MCF 10A (cell line): ENCODE measurements at regions of chr9 and their contacts with region 1.

Region 1: DNA sequence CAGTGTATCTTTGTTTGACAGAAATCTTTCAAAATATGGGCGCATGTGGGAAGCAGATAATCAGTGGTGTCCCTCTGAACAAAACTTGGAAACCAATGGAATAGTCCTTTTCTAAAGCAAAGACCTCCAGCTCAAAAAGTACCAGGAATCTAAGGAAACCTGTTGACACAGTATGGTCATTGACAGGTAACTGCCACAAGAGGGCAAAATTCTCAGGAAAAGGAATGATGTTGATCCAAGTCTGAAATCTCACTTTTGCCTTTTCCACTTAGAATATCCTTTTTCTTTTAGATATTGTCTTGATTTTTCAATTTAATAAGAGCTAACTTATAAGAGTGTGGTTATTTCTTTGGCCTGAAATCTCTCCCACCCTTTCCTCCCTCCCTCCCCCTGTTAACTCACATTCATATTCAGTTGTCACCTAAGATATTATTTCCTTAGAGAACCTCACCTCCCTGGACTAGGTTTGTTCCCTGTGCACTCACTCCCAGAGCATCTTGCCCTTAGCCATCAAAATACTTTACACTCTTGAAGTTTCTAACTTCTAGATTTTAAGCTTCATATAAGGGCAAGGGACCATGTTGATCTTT is 59.0 kb upstream of the BARX1 start:
- DNase-seq: peak; percentile 62
- H3K4me3 Mint-ChIP-seq: no peak overlapping the region
- H3K27ac Mint-ChIP-seq: no peak overlapping the region
- H3K4me1 Mint-ChIP-seq: peaks cover 7% of the 10 kb centered on the region
- H3K27me3 Mint-ChIP-seq: no peaks in the 10 kb centered on the region
- CTCF ChIP-seq: peak; percentile 47

Region 2: GRCh38 chr9:93962561-93963440 is 51.4 kb before region 1 on chr9:
- CTCF ChIA-PET with region 1: interaction called, 23 read pairs
- POLR2A ChIA-PET with region 1: no interaction called
- intact Hi-C with region 1: no loop called
- DNase-seq: peak; percentile 92
- H3K4me3 Mint-ChIP-seq: no peak overlapping the region
- H3K27ac Mint-ChIP-seq: peak overlapping the region; percentile 2
- H3K4me1 Mint-ChIP-seq: peaks cover 8% of the 10 kb centered on the region
- H3K27me3 Mint-ChIP-seq: no peaks in the 10 kb centered on the region
- CTCF ChIP-seq: peak; percentile 75

Region 3: DNA sequence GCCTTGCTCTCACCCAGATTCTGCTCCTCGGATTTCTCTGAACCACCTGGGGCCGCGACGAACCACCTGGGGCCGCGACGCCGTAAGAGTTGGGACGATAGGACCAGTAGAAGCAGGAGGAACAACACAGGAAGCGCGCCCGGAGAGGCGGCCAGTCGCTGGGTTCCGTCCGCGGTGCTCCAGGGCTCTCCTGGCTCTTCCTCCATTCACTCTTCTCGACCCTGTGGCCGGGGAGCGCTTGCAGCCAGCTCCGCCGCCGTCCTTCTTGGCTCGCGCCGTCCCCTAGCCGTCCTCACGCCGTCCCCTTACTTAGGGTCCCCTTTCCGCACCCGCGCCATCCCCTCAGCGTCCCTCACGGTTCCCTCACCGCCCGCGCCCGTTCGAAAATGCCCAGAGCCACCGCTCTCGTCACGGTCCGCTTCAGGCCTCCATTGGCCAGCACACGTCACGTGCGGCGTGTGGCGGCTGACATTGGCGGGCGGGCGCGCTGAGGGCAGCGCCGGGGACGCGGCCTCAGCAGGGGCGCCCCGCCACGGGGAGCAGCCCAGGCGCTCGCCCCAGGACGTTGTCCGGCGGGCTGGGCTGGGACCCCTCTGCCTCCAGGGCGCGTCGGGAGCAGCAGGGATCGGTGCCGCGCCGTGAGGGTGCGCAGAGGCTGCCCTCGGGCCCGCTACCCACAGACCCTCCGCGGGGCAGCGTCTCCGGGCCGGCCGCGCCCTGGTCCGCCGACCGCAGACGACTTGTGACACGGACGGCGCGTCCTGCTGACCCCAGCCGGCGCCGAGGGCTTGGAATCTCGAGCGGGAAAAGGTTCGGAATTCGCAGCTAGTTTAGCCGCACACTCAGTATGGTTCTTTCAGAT is 16.4 kb after region 1 on chr9:
- CTCF ChIA-PET with region 1: interaction called, 42 read pairs
- POLR2A ChIA-PET with region 1: interaction called, 6 read pairs
- intact Hi-C with region 1: no loop called
- DNase-seq: peak; percentile 86
- H3K4me3 Mint-ChIP-seq: peak overlapping the region; percentile 87
- H3K27ac Mint-ChIP-seq: peak overlapping the region; percentile 87
- H3K4me1 Mint-ChIP-seq: peaks cover 10% of the 10 kb centered on the region
- H3K27me3 Mint-ChIP-seq: no peaks in the 10 kb centered on the region
- CTCF ChIP-seq: no peak

Region 4: GRCh38 chr9:94166237-94166963 is 152.2 kb after region 1 on chr9:
- CTCF ChIA-PET with region 1: interaction called, 11 read pairs
- POLR2A ChIA-PET with region 1: interaction called, 5 read pairs
- intact Hi-C with region 1: loop called (anchors 5 kb)
- DNase-seq: peak; percentile 99
- H3K4me3 Mint-ChIP-seq: peak overlapping the region; percentile 83
- H3K27ac Mint-ChIP-seq: peak overlapping the region; percentile 86
- H3K4me1 Mint-ChIP-seq: peaks cover 22% of the 10 kb centered on the region
- H3K27me3 Mint-ChIP-seq: no peaks in the 10 kb centered on the region
- CTCF ChIP-seq: no peak

Region 5: GRCh38 chr9:94197607-94198006 is 183.4 kb after region 1 on chr9:
- CTCF ChIA-PET with region 1: interaction called, 11 read pairs
- POLR2A ChIA-PET with region 1: interaction called, 3 read pairs
- intact Hi-C with region 1: no loop called
- DNase-seq: no peak
- H3K4me3 Mint-ChIP-seq: no peak overlapping the region
- H3K27ac Mint-ChIP-seq: no peak overlapping the region
- H3K4me1 Mint-ChIP-seq: no peaks in the 10 kb centered on the region
- H3K27me3 Mint-ChIP-seq: no peaks in the 10 kb centered on the region
- CTCF ChIP-seq: no peak

Region 6: GRCh38 chr9:94222872-94223271 is 208.7 kb after region 1 on chr9:
- CTCF ChIA-PET with region 1: interaction called, 243 read pairs
- POLR2A ChIA-PET with region 1: no interaction called
- intact Hi-C with region 1: no loop called
- DNase-seq: peak; percentile 17
- H3K4me3 Mint-ChIP-seq: no peak overlapping the region
- H3K27ac Mint-ChIP-seq: no peak overlapping the region
- H3K4me1 Mint-ChIP-seq: no peaks in the 10 kb centered on the region
- H3K27me3 Mint-ChIP-seq: peaks cover 11% of the 10 kb centered on the region
- CTCF ChIP-seq: no peak